Endothelial cell of umbilical vein (primary cell): ENCODE measurements at regions of chr9 and their contacts with region 1.

Region 1: DNA sequence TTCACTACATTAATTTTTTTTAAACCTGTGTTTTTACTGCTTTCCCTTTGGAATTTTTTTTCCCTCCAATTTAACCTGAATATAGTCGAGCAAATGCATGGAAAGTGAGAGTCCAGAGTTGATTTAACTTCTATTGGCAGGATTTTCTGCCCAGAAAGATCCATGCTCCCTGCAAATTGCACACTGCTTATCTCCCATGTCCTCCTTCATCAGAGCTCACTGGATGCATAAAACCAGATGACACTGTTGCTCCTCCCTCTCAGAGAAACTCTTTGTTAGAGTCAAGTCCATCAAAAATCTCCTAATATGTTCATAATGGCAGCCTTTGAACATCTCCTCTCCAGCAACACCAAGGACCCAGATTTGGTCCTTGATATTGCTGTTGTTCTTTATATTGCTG is 297.0 kb upstream of the SLC24A2 start:
- DNase-seq: no peak
- H3K4me3 ChIP-seq: no peak overlapping the region
- H3K27ac ChIP-seq: no peak overlapping the region
- H3K4me1 ChIP-seq: no peaks in the 10 kb centered on the region
- H3K27me3 ChIP-seq: peaks cover 0 to 4% of the 10 kb centered on the region in 2 experiments
- CTCF ChIP-seq: no peak
- POLR2A ChIP-seq: no peak

Region 2: DNA sequence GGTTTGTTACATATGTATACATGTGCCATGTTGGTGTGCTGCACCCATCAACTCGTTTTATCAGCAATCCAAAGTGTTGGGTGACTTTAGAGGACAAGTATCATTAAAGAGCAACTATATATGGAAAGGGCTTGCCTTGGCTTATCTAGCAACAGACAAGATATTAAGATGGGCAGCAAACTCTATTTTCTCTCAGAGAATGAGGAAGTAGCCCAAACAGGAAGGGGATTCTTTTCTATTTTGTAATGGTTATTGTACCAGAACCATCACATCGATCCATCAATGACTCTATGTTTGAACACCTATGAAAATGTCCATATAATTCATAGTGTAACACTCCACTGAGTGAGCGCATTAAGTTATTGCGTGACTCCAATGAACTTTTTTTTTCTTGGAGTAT is 36.9 kb before region 1 on chr9:
- CTCF ChIA-PET with region 1: no interaction called
- POLR2A ChIA-PET with region 1: no interaction called
- dilution Hi-C with region 1: no loop called
- intact Hi-C with region 1: loop called (anchors 1 kb)
- DNase-seq: no peak
- H3K4me3 ChIP-seq: no peak overlapping the region
- H3K27ac ChIP-seq: no peak overlapping the region
- H3K4me1 ChIP-seq: no peaks in the 10 kb centered on the region
- H3K27me3 ChIP-seq: no peaks in the 10 kb centered on the region
- CTCF ChIP-seq: no peak
- POLR2A ChIP-seq: no peak